B cell (primary cell): ENCODE measurements at regions of chr6 and their contacts with region 1.

Region 1: GRCh38 chr6:43667245-43668150 is 20.1 kb downstream of the MRPS18A start:
- DNase-seq: peak; percentile 86
- ATAC-seq: peak; percentile 78
- H3K4me3 ChIP-seq: no peak overlapping the region
- H3K4me3 Mint-ChIP-seq: peak overlapping the region; percentile 61
- H3K27ac ChIP-seq: no peak overlapping the region
- H3K27ac Mint-ChIP-seq: peak overlapping the region; percentile 70
- H3K4me1 ChIP-seq: peaks cover 13 to 15% of the 10 kb centered on the region in 2 donors
- H3K4me1 Mint-ChIP-seq: peaks cover 19% of the 10 kb centered on the region
- H3K27me3 ChIP-seq: no peaks in the 10 kb centered on the region
- H3K27me3 Mint-ChIP-seq: no peaks in the 10 kb centered on the region
- CTCF ChIP-seq: peak; percentile 95

Region 2: GRCh38 chr6:43629505-43630300 is 37.8 kb before region 1 on chr6:
- CTCF ChIA-PET with region 1: interaction called, 13 read pairs
- POLR2A ChIA-PET with region 1: interaction called, 3 read pairs
- intact Hi-C with region 1: loop called (anchors 5 kb)
- DNase-seq: peak; percentile 95
- ATAC-seq: peak; percentile 66
- H3K4me3 ChIP-seq: peak overlapping the region; percentile 64 to 96 (median 90)
- H3K4me3 Mint-ChIP-seq: peak overlapping the region; percentile 100
- H3K27ac ChIP-seq: peak overlapping the region; percentile 70 to 84
- H3K27ac Mint-ChIP-seq: peak overlapping the region; percentile 99
- H3K4me1 ChIP-seq: peaks cover 22 to 33% of the 10 kb centered on the region in 2 donors
- H3K4me1 Mint-ChIP-seq: peaks cover 32% of the 10 kb centered on the region
- H3K27me3 ChIP-seq: no peaks in the 10 kb centered on the region
- H3K27me3 Mint-ChIP-seq: no peaks in the 10 kb centered on the region
- CTCF ChIP-seq: no peak

Region 3: GRCh38 chr6:43687437-43688347 is 20.2 kb after region 1 on chr6 and contains the start of gene MRPS18A:
- CTCF ChIA-PET with region 1: interaction called, 12 read pairs
- POLR2A ChIA-PET with region 1: no interaction called
- intact Hi-C with region 1: no loop called
- DNase-seq: peak; percentile 83
- ATAC-seq: peak; percentile 92
- H3K4me3 ChIP-seq: peak within 1 kb of the TSS; percentile 80 to 98 (median 96)
- H3K4me3 Mint-ChIP-seq: peak within 1 kb of the TSS; percentile 97
- H3K27ac ChIP-seq: peak within 1 kb of the TSS; percentile 76 to 90
- H3K27ac Mint-ChIP-seq: peak within 1 kb of the TSS; percentile 92
- H3K4me1 ChIP-seq: peaks cover 37 to 42% of the 10 kb centered on the region in 2 donors
- H3K4me1 Mint-ChIP-seq: peaks cover 48% of the 10 kb centered on the region
- H3K27me3 ChIP-seq: no peaks in the 10 kb centered on the region
- H3K27me3 Mint-ChIP-seq: no peaks in the 10 kb centered on the region
- CTCF ChIP-seq: no peak
- total RNA-seq, gene MRPS18A: 37.0 and 39.6 TPM in 2 replicates

Region 4: DNA sequence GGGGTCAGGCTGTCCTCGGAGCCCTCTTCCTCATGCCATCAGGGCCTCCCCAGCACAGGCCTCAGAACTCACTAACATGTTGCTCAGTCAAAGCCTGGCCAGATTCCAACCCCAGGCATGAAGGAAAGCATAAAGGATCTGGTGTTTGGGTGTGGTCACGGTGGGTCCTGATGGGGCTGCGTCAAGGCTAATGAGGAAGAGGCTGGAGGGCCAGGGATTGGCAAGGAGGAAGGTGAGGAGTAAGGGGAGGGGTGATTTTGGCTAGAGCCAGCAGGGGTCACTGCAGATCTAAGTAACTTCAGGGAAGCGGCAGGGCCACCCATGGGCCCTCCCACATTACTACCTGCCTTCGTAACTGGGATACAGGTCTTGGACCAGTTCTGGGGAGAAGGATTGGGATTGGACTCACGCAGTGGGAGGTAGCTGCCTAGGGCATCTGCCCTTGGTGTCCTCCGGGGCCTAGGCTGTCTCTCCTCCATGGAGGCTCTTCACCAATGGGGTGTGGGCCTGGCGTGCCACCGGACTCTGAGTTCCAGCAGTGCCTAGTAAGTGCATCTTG is 56.3 kb after region 1 on chr6:
- CTCF ChIA-PET with region 1: interaction called, 21 read pairs
- POLR2A ChIA-PET with region 1: no interaction called
- intact Hi-C with region 1: loop called (anchors 5 kb)
- DNase-seq: peak; percentile 82
- ATAC-seq: peak; percentile 75
- H3K4me3 ChIP-seq: no peak overlapping the region
- H3K4me3 Mint-ChIP-seq: no peak overlapping the region
- H3K27ac ChIP-seq: no peak overlapping the region
- H3K27ac Mint-ChIP-seq: peak overlapping the region; percentile 16
- H3K4me1 ChIP-seq: peaks cover 20 to 24% of the 10 kb centered on the region in 2 donors
- H3K4me1 Mint-ChIP-seq: peaks cover 27% of the 10 kb centered on the region
- H3K27me3 ChIP-seq: no peaks in the 10 kb centered on the region
- H3K27me3 Mint-ChIP-seq: peaks cover 9% of the 10 kb centered on the region
- CTCF ChIP-seq: peak; percentile 77

Region 5: GRCh38 chr6:43769526-43770416 is 102.3 kb after region 1 on chr6 and contains the start of gene VEGFA:
- CTCF ChIA-PET with region 1: interaction called, 59 read pairs
- POLR2A ChIA-PET with region 1: no interaction called
- intact Hi-C with region 1: loop called (anchors 1 kb)
- DNase-seq: peak; percentile 91
- ATAC-seq: peak; percentile 77
- H3K4me3 ChIP-seq: peak within 1 kb of the TSS; percentile 54 to 71 (median 65)
- H3K4me3 Mint-ChIP-seq: peak within 1 kb of the TSS; percentile 84
- H3K27ac ChIP-seq: peak within 1 kb of the TSS in 1 of 2 donors; percentile 41
- H3K27ac Mint-ChIP-seq: peak within 1 kb of the TSS; percentile 72
- H3K4me1 ChIP-seq: peaks cover 7 to 25% of the 10 kb centered on the region in 2 donors
- H3K4me1 Mint-ChIP-seq: peaks cover 22% of the 10 kb centered on the region
- H3K27me3 ChIP-seq: peaks cover 0 to 42% (median 18%) of the 10 kb centered on the region in 4 experiments
- H3K27me3 Mint-ChIP-seq: peaks cover 24% of the 10 kb centered on the region
- CTCF ChIP-seq: peak; percentile 98
- total RNA-seq, gene VEGFA: 3.9 and 4.9 TPM in 2 replicates

Region 6: GRCh38 chr6:43817192-43817591 is 149.7 kb after region 1 on chr6:
- CTCF ChIA-PET with region 1: interaction called, 5 read pairs
- POLR2A ChIA-PET with region 1: no interaction called
- intact Hi-C with region 1: loop called (anchors 1 kb)
- DNase-seq: peak; percentile 31
- ATAC-seq: peak; percentile 57
- H3K4me3 ChIP-seq: no peak overlapping the region
- H3K4me3 Mint-ChIP-seq: no peak overlapping the region
- H3K27ac ChIP-seq: no peak overlapping the region
- H3K27ac Mint-ChIP-seq: no peak overlapping the region
- H3K4me1 ChIP-seq: no peaks in the 10 kb centered on the region
- H3K4me1 Mint-ChIP-seq: no peaks in the 10 kb centered on the region
- H3K27me3 ChIP-seq: peaks cover 0 to 2% (median 0%) of the 10 kb centered on the region in 4 experiments
- H3K27me3 Mint-ChIP-seq: peaks cover 17% of the 10 kb centered on the region
- CTCF ChIP-seq: peak; percentile 10